ENCODE measurements at regions of chr18 and their contacts with region 1.

Region 1: GRCh38 chr18:34787931-34788532 is 77.9 kb downstream of the DTNA start:
- DNase-seq: peak; percentile 40
- H3K4me3 ChIP-seq: no peak overlapping the region
- H3K27ac ChIP-seq: no peak overlapping the region
- H3K4me1 ChIP-seq: no peaks in the 10 kb centered on the region
- H3K27me3 ChIP-seq: no peaks in the 10 kb centered on the region
- CTCF ChIP-seq: peak; percentile 66

Region 2: DNA sequence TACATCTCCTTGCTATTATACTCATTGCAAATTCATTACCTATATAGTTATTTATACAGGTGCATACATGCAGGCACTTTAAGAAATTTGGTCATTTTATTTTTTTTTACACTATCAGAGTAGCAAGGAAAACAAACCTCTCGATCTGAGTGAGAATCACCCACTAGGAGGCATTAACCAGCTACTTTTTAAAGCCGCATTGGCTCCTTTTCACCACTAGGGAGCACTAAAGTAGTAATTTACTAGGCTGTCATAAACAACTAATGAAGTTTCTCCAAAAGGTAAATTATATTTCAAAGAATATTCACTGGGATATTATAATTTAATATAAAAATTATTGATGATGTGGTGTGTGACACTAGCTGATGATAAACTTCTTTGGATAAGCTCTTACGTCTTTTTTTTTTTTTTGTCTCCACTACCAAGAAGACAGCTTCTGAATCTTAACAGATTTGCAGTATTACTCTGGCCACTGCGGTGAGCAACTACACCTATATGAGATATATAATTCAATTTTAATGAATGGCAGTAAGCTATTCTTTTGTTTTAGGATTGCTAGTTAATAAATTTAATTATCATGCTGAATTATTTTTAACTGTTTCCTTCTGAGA is 665.2 kb before region 1 on chr18:
- intact Hi-C with region 1: loop called (anchors 10 kb)
- DNase-seq: peak; percentile 32
- H3K4me3 ChIP-seq: no peak overlapping the region
- H3K27ac ChIP-seq: no peak overlapping the region
- H3K4me1 ChIP-seq: no peaks in the 10 kb centered on the region
- H3K27me3 ChIP-seq: no peaks in the 10 kb centered on the region
- CTCF ChIP-seq: peak; percentile 91

Region 3: GRCh38 chr18:34352385-34353163 is 435.5 kb before region 1 on chr18:
- intact Hi-C with region 1: loop called (anchors 5 kb)
- DNase-seq: no peak
- H3K4me3 ChIP-seq: no peak overlapping the region
- H3K27ac ChIP-seq: no peak overlapping the region
- H3K4me1 ChIP-seq: no peaks in the 10 kb centered on the region
- H3K27me3 ChIP-seq: no peaks in the 10 kb centered on the region
- CTCF ChIP-seq: no peak

Region 4: DNA sequence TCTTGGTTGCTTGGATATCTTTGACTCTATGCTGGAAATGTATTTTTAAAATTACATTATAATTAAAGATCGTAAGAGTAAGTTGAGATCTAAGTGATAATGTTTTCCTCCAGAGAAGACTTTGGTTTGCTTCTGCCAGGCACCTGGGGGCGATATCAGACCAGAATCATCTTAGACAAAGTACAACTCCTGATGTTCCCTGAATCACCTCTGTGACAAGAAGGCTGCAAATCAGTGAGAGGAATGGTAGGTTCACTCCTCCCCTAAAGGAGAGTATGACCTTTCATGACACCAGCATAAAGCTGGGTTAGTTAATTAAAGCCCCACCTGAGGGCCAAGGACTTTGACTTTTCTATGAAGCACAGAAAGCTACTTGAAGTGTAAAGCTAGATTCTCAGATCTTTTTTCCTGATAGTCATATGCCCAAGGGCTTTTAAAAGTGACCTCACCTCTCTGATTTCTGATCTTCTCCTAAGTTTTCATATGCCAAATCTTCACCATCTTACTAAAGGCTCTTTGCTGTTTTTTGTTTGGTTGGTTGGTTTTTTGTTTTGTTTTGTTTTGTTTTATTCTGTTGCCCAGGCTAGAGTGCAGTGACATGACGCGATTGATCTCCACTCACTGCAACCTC is 192.2 kb before region 1 on chr18:
- intact Hi-C with region 1: loop called (anchors 5 kb)
- DNase-seq: no peak
- H3K4me3 ChIP-seq: no peak overlapping the region
- H3K27ac ChIP-seq: no peak overlapping the region
- H3K4me1 ChIP-seq: no peaks in the 10 kb centered on the region
- H3K27me3 ChIP-seq: no peaks in the 10 kb centered on the region
- CTCF ChIP-seq: no peak

Region 5: GRCh38 chr18:34661464-34662111 is 126.4 kb before region 1 on chr18:
- intact Hi-C with region 1: loop called (anchors 5 kb)
- DNase-seq: no peak
- H3K4me3 ChIP-seq: no peak overlapping the region
- H3K27ac ChIP-seq: no peak overlapping the region
- H3K4me1 ChIP-seq: no peaks in the 10 kb centered on the region
- H3K27me3 ChIP-seq: no peaks in the 10 kb centered on the region
- CTCF ChIP-seq: peak; percentile 70

Region 6: GRCh38 chr18:34752056-34752455 is 36.0 kb before region 1 on chr18:
- intact Hi-C with region 1: no loop called
- DNase-seq: no peak
- H3K4me3 ChIP-seq: no peak overlapping the region
- H3K27ac ChIP-seq: no peak overlapping the region
- H3K4me1 ChIP-seq: no peaks in the 10 kb centered on the region
- H3K27me3 ChIP-seq: no peaks in the 10 kb centered on the region
- CTCF ChIP-seq: no peak